ENCODE measurements at regions of chr11 and their contacts with region 1.

Region 1: DNA sequence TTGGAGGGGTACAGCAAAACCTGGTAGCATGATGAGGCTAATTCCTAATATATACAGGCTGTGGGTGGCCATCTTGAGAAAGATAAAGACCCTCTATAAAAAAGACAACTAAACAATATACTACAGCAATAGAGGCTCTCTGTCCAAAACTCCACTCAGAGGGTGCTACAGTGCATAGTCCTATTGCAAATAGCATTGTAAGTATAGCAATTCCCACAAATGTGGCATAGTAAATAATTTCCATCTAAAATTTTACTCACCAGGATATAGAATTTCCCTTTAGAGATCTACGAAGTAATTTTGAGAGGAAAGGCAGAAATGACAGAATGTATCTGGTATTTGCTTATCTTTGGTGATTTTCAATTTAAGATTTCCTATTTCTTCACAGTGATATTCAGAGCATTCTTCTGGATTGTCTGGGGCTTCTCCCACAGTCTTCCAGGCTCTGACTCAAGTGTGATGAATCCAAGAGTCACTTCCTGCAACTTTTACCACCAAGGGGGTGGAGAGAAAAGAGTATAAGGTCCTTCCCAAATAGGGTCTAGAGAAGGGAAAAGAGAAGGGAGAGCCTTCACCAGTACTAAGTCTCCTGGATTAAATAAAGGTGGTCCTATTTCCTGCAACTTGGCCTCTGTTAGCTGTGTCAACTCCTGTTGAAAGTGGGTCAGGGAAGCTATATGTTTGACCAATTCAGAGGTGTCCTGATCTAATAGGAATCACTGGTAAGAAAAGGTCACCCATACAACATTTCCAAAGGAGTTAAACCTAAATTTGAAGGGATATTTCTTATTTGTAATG is 1054.7 kb upstream of the CNTN5 start:
- DNase-seq: peak; percentile 72
- H3K4me3 ChIP-seq: no peak overlapping the region
- H3K27ac ChIP-seq: peak overlapping the region; percentile 91
- H3K4me1 ChIP-seq: peaks cover 22% of the 10 kb centered on the region
- H3K27me3 ChIP-seq: no peaks in the 10 kb centered on the region
- CTCF ChIP-seq: no peak
- POLR2A ChIP-seq: no peak

Region 2: DNA sequence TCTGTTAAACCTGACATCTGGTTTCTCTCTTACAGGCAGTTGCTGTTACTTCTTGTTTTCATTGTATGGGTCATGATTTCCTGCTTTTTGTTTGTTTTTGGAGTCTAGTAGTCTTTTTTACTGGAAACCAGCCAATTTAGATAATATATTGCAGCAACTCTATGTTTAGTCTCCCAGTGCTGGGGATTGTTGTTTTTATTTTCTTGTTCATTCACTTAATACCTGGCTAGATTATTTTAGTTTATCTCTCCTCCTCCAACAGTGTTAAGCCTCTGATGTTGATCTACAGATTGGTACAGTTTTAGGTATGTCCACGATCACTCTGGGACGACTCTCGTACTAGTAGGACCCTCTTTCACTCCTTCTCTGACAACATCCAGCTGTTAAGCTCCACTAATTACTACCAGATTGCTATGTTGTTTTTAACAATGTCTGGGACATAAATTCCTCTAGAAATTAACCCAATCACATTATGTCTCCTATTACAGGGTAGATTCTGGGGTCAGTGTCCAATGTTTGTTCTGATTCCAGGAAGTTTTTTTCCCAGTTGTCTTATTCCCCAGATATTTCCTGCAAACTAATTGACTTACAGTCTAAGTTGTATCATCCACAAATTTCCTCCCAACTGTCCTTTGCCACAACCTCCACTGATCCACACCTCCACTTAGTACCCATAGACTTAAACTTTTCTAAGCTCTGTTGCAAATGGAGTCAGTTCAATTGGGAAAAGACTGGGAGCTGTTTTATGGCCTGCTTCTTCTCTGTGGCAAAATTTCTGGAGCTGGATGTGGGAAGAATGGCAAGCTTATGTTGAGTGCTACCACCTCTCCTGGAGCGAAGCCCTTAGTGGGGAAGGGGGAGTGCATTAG is 225.9 kb before region 1 on chr11:
- CTCF ChIA-PET with region 1: no interaction called
- POLR2A ChIA-PET with region 1: no interaction called
- dilution Hi-C with region 1: no loop called
- intact Hi-C with region 1: loop called (anchors 10 kb)
- DNase-seq: peak; percentile 79
- H3K4me3 ChIP-seq: peak overlapping the region in 1 of 3 experiments; percentile 28
- H3K27ac ChIP-seq: peak overlapping the region; percentile 84
- H3K4me1 ChIP-seq: peaks cover 24% of the 10 kb centered on the region
- H3K27me3 ChIP-seq: no peaks in the 10 kb centered on the region
- CTCF ChIP-seq: no peak
- POLR2A ChIP-seq: no peak

Region 3: GRCh38 chr11:97814325-97814959 is 151.6 kb before region 1 on chr11:
- CTCF ChIA-PET with region 1: no interaction called
- POLR2A ChIA-PET with region 1: no interaction called
- dilution Hi-C with region 1: no loop called
- intact Hi-C with region 1: loop called (anchors 5 kb)
- DNase-seq: peak; percentile 1
- H3K4me3 ChIP-seq: no peak overlapping the region
- H3K27ac ChIP-seq: no peak overlapping the region
- H3K4me1 ChIP-seq: no peaks in the 10 kb centered on the region
- H3K27me3 ChIP-seq: no peaks in the 10 kb centered on the region
- CTCF ChIP-seq: no peak
- POLR2A ChIP-seq: no peak

Region 4: DNA sequence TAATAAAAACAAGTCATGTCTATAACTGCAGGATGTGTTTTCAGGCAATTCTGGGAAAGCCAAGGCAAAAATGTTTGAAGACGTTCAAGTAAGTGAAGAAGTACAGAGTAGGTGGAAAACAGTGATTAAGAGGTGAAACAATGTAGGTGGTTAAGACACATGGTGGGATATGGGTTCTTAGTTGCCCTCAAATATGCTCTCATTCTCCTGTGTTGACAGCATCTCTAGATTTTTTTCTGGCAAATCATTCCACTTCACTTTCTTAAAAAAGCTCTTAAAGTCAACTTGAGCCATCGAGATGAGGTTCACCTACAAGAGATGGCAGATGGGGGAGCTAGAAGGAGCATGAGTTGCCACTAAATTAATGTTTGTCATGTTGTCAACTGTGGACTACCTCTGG is 13.7 kb after region 1 on chr11:
- CTCF ChIA-PET with region 1: no interaction called
- POLR2A ChIA-PET with region 1: no interaction called
- dilution Hi-C with region 1: no loop called
- intact Hi-C with region 1: no loop called
- DNase-seq: no peak
- H3K4me3 ChIP-seq: no peak overlapping the region
- H3K27ac ChIP-seq: no peak overlapping the region
- H3K4me1 ChIP-seq: no peaks in the 10 kb centered on the region
- H3K27me3 ChIP-seq: no peaks in the 10 kb centered on the region
- CTCF ChIP-seq: no peak
- POLR2A ChIP-seq: no peak